ENCODE measurements at regions of chr17 and their contacts with region 1.

Region 1: GRCh38 chr17:75652915-75653549 is 13.9 kb downstream of the RECQL5 start:
- DNase-seq: peak; percentile 85
- H3K4me3 ChIP-seq: no peak overlapping the region
- H3K27ac ChIP-seq: no peak overlapping the region
- H3K4me1 ChIP-seq: no peaks in the 10 kb centered on the region
- H3K27me3 ChIP-seq: no peaks in the 10 kb centered on the region
- CTCF ChIP-seq: peak; percentile 87
- EP300 ChIP-seq: no peak
- RAD21 ChIP-seq: peak; percentile 68

Region 2: GRCh38 chr17:75667021-75667790 is 14.2 kb after region 1 on chr17 and contains the starts of genes RECQL5 and SAP30BP:
- CTCF ChIA-PET with region 1: interaction called, 38 read pairs
- POLR2A ChIA-PET with region 1: interaction called, 3 read pairs
- DNase-seq: peak; percentile 96
- H3K4me3 ChIP-seq: peak within 1 kb of the TSS; percentile 94 to 97
- H3K27ac ChIP-seq: peak within 1 kb of the TSS; percentile 79 to 81
- H3K4me1 ChIP-seq: peaks cover 12 to 16% of the 10 kb centered on the region in 2 experiments; a peak in 3 of 4 replicates
- H3K27me3 ChIP-seq: no peaks in the 10 kb centered on the region
- CTCF ChIP-seq: no peak
- EP300 ChIP-seq: no peak
- RAD21 ChIP-seq: no peak
- polyA plus RNA-seq, gene RECQL5: 22.5 and 25.3 TPM in 2 replicates
- polyA plus RNA-seq, gene SAP30BP: 145 and 158 TPM in 2 replicates

Region 3: DNA sequence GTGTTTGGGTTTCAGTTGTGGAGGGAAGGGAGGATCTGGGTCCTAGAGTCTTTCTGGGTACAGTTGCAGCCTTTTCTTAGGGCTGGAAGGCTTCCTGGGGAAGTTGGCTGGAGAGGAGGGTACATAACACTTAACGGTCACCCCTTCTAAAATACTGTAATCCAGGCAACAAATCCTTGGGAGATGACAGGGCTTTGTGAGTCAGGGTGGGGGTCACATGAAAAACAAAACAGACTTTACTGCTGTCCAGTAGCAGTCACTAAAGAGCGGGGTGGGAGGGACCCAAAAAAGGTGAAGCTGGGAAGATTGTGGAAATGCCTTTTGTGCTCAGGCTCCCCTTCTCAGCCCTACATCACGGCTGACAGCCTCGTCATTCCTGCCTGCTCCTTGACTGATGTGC is 20.5 kb after region 1 on chr17:
- CTCF ChIA-PET with region 1: interaction called, 38 read pairs
- POLR2A ChIA-PET with region 1: no interaction called
- DNase-seq: no peak
- H3K4me3 ChIP-seq: no peak overlapping the region
- H3K27ac ChIP-seq: no peak overlapping the region
- H3K4me1 ChIP-seq: peaks cover under 1% of the 10 kb centered on the region in 2 experiments; a peak in 3 of 4 replicates
- H3K27me3 ChIP-seq: no peaks in the 10 kb centered on the region
- CTCF ChIP-seq: no peak
- EP300 ChIP-seq: no peak
- RAD21 ChIP-seq: no peak

Region 4: GRCh38 chr17:75693500-75694481 is 40.8 kb after region 1 on chr17:
- CTCF ChIA-PET with region 1: interaction called, 11 read pairs
- POLR2A ChIA-PET with region 1: no interaction called
- DNase-seq: peak; percentile 85
- H3K4me3 ChIP-seq: peak overlapping the region in 1 of 2 experiments; percentile 16; a peak in 2 of 4 replicates
- H3K27ac ChIP-seq: peak overlapping the region; percentile 91 to 99
- H3K4me1 ChIP-seq: peaks cover 45 to 62% of the 10 kb centered on the region in 2 experiments; a peak in 3 of 4 replicates
- H3K27me3 ChIP-seq: no peaks in the 10 kb centered on the region
- CTCF ChIP-seq: peak; percentile 53
- EP300 ChIP-seq: peak; percentile 48 to 87; a peak in 2 of 4 replicates
- RAD21 ChIP-seq: peak; percentile 52